IMR-90 (cell line): ENCODE measurements at regions of chr22 and their contacts with region 1.

Region 1: DNA sequence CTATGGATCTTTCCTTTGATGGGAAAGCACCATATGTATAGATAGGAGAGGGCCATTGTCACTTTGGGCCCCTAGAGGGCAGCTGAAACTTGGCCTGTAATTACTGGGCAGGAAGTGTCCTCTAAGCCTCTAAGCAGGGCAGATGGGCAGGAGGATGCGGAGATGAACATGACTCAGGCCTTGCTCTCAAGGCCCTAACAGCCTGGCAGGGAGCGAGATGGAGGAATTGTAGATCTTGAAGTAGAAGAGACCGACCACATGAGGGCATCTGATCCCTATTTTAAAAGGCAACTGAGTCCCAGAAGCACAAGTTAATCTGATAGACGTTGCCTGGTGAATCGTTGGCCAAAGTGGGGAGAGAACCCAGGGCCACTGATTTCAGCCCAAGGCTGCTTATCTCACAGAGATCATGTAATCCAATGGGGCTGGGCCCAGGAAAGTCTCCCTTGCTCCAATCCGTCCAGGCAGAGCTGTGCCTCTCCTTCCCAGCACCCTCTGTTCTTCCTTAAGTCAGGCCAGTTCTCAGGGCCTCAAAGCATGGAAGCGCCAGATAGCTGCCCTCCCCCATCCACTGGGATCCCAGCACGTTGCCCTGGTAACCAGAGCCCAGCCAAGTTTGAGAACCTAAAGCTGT is 2.5 kb upstream of the SEPTIN3 start:
- DNase-seq: peak; percentile 88
- ATAC-seq: peak; percentile 89
- H3K4me3 ChIP-seq: no peak overlapping the region
- H3K27ac ChIP-seq: no peak overlapping the region
- H3K4me1 ChIP-seq: no peaks in the 10 kb centered on the region; the same call in 1 of the 2 replicates
- H3K27me3 ChIP-seq: peaks cover 18% of the 10 kb centered on the region; the same call in 1 of the 2 replicates
- CTCF ChIP-seq: peak; percentile 65
- POLR2A ChIP-seq: no peak
- RAD21 ChIP-seq: peak; percentile 66

Region 2: DNA sequence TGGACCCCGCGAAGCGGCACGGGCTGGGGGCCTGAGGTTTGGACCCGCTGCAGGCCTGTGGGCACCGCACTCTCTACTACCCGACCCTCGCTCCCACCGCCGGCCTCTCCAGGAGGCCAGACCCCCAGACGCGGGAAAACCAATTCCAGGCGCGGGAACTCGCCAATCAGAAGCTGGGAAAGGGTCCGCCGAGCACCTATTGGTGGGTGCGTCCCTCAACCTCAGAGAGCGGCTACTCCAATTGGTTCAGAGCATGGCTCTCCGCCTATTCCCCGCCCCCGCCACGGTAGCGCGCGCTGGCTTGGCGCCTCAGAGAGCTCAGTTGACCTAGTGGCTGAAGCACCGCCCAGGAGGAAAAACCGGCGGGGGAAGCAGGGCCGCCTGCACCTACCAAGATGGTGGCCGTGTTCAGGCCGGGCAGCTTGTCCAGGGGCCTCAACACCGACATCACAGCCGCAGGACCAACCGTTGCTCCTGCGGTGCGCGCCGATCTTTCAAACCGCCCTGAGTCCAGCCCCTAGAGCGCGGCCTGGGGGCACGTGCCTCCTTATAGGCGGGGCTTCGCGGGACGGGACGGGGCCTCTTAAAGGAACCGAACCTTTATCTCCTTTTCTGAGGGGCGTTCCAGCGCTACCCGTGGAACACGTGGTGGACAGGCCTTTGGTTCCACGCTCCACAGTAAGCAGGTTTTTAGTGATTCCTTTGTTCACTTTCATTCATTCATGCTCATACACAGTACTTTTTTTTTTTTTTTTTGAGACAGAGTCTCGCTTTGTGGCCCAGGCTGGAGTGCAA is 19.9 kb before region 1 on chr22 and contains the start of gene CENPM:
- CTCF ChIA-PET with region 1: no interaction called
- POLR2A ChIA-PET with region 1: no interaction called
- dilution Hi-C with region 1: no loop called
- in situ Hi-C with region 1: no loop called
- intact Hi-C with region 1: no loop called
- DNase-seq: peak; percentile 91
- ATAC-seq: peak; percentile 98
- H3K4me3 ChIP-seq: peak within 1 kb of the TSS; percentile 82
- H3K27ac ChIP-seq: peak within 1 kb of the TSS; percentile 42; the same call in 1 of the 2 replicates
- H3K4me1 ChIP-seq: peaks cover 8% of the 10 kb centered on the region
- H3K27me3 ChIP-seq: no peaks in the 10 kb centered on the region
- CTCF ChIP-seq: no peak
- POLR2A ChIP-seq: no peak
- RAD21 ChIP-seq: no peak
- total RNA-seq, gene CENPM: 14.7 and 18.1 TPM in 2 replicates

Region 3: DNA sequence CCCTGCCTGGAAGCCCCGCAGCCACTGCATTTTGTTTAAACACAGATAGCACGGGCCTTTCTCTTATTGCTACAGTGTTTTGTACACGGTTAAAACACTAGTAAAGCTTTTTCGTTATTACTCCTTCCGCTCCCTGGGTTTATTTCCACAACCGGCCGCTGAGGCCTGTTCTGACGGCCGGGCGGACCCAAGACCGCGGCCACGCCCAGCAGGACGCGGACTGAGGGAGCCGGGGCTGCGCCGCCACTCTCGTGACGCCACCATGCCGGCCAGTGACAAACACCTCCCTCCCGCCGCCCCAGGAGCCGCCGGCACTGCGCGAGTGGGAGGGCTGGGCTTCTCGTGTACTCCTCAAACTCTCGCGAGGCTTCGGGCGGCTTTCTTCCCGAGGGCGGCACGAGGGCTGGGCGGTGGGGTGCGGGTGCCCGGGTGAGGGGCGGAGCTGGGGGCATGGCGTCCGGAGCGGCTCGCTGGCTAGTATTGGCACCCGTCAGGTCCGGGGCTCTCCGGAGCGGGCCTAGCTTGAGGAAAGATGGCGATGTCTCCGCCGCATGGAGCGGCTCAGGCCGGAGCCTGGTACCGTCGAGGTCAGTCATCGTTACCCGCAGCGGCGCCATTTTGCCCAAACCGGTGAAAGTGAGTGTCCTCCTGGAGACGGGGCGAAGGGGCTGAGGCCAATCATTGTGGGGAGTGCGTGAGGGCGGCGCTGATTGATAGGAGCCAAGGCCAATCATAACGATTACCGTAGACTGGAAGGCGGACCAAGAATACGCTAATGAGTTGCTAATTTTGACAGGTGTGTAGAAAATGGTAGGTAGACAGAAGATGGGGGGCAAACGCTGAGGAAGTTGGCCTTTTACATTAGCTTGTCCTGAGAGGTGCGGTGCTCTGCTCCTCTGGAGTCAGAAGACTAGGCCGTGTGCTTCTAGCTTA is 112.9 kb after region 1 on chr22 and contains the start of gene SMDT1:
- CTCF ChIA-PET with region 1: no interaction called
- POLR2A ChIA-PET with region 1: no interaction called
- dilution Hi-C with region 1: no loop called
- in situ Hi-C with region 1: no loop called
- intact Hi-C with region 1: loop called (anchors 2 kb)
- DNase-seq: peak; percentile 97
- ATAC-seq: peak; percentile 92
- H3K4me3 ChIP-seq: peak within 1 kb of the TSS; percentile 59
- H3K27ac ChIP-seq: peak within 1 kb of the TSS; percentile 74
- H3K4me1 ChIP-seq: peaks cover 10% of the 10 kb centered on the region
- H3K27me3 ChIP-seq: no peaks in the 10 kb centered on the region
- CTCF ChIP-seq: no peak
- POLR2A ChIP-seq: peak; percentile 90
- RAD21 ChIP-seq: no peak
- total RNA-seq, gene SMDT1: 2.3 and 2.5 TPM in 2 replicates

Region 4: DNA sequence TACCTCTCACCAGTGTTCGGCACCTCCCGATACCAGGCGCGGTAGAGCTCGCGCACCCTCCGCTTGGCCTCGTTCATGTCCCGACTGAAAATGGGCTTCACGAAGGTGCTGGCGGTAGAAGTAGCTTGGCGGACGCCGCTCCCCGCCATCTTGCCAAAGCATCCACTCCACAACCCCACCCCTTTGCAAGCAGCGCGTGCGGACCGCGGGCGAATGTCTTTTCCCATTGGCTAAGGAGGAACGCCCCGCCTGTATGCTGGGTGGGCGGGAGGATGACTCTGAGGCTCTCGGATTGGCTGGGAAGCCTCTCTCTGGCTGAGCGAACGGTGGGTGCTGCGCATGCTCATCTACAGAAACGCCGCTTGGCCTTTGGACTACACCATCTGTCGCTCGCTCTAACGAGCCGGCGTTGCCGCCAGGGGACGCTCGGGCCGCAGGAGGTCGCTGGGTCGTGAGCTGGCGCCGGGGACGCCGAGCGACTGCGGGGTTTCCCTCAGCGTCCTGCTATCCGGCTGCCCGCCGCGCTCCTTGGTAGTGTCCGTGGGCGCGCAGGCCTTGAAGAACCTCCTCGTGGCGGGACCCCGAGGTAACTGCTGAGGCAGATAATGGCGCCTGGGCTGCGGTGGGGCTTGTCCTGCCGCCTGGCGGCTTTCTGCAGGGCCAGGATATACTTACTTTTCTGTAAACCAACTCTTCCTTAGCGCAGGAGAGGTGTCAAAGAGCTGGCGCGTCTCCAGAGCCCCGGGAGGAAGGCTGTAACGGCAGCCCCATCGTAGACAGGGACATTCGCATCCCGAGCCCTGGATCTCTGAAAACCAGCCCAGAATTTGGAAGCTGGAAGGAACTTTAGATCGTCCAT is 124.1 kb after region 1 on chr22 and contains the start of gene NDUFA6:
- CTCF ChIA-PET with region 1: interaction called, 3 read pairs
- POLR2A ChIA-PET with region 1: no interaction called
- dilution Hi-C with region 1: no loop called
- in situ Hi-C with region 1: no loop called
- intact Hi-C with region 1: loop called (anchors 1 kb)
- DNase-seq: peak; percentile 99
- ATAC-seq: peak; percentile 98
- H3K4me3 ChIP-seq: peak within 1 kb of the TSS; percentile 64
- H3K27ac ChIP-seq: peak within 1 kb of the TSS; percentile 82
- H3K4me1 ChIP-seq: peaks cover 2% of the 10 kb centered on the region; the same call in 1 of the 2 replicates
- H3K27me3 ChIP-seq: no peaks in the 10 kb centered on the region
- CTCF ChIP-seq: peak; percentile 94
- POLR2A ChIP-seq: peak; percentile 96
- RAD21 ChIP-seq: peak; percentile 82
- total RNA-seq, gene NDUFA6: 48.8 and 92.2 TPM in 2 replicates

Region 5: GRCh38 chr22:42114721-42115120 is 148.0 kb after region 1 on chr22:
- CTCF ChIA-PET with region 1: interaction called, 4 read pairs
- POLR2A ChIA-PET with region 1: no interaction called
- dilution Hi-C with region 1: no loop called
- in situ Hi-C with region 1: no loop called
- intact Hi-C with region 1: loop called (anchors 1 kb)
- DNase-seq: peak; percentile 6
- ATAC-seq: no peak
- H3K4me3 ChIP-seq: no peak overlapping the region
- H3K27ac ChIP-seq: no peak overlapping the region
- H3K4me1 ChIP-seq: peaks cover 2% of the 10 kb centered on the region; the same call in 1 of the 2 replicates
- H3K27me3 ChIP-seq: no peaks in the 10 kb centered on the region; the same call in 1 of the 2 replicates
- CTCF ChIP-seq: peak; percentile 31
- POLR2A ChIP-seq: no peak
- RAD21 ChIP-seq: peak; percentile 51

Region 6: GRCh38 chr22:42437488-42438292 is 471.0 kb after region 1 on chr22:
- CTCF ChIA-PET with region 1: interaction called, 3 read pairs
- POLR2A ChIA-PET with region 1: no interaction called
- dilution Hi-C with region 1: no loop called
- in situ Hi-C with region 1: loop called (anchors 5 kb)
- intact Hi-C with region 1: loop called (anchors 2 kb)
- DNase-seq: peak; percentile 18
- ATAC-seq: peak; percentile 91
- H3K4me3 ChIP-seq: peak overlapping the region; percentile 42
- H3K27ac ChIP-seq: no peak overlapping the region
- H3K4me1 ChIP-seq: peaks cover 3% of the 10 kb centered on the region; the same call in 1 of the 2 replicates
- H3K27me3 ChIP-seq: peaks cover 26% of the 10 kb centered on the region
- CTCF ChIP-seq: peak; percentile 93
- POLR2A ChIP-seq: no peak
- RAD21 ChIP-seq: peak; percentile 96

Region 7: DNA sequence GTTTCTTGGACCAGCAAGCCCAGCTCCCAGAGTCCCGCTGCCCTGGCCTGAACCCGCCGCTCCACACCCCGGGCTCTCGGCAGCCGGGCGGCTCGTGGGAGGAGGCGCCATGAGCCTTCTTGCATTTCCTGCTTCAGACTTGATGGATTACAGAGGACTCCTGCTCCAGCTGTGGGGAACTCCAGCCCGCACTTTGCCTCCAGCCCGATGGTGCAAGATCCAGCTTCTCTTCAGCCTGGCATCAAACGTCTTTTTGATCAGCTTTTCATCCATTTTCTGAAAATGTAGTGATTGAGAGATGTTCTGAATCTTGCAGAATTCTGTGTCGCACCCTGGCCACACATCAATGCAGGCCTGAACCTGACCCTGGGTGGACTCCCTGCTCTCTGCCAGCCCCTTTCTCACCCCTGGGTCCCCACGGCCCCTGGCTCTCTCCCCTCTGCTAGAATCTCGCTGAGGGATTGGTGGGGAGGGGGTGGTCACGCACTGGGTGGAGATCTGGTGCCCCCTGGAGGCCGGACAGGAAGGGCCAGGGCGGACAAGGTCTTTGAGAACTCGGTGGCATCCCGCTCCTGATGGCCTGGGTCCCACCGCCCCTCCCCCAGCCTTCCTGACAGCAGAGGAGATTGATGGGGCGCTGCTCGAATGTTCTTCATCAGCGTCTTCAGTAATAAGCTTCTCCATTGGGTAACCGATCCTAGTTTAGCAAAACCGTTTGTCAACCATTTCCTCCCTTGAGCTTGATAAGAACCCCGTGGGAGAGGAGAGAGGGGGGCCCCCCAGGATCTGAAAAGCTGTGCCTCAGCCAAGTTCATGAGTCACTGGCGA is 477.6 kb after region 1 on chr22:
- CTCF ChIA-PET with region 1: interaction called, 7 read pairs
- POLR2A ChIA-PET with region 1: no interaction called
- dilution Hi-C with region 1: no loop called
- in situ Hi-C with region 1: loop called (anchors 5 kb)
- intact Hi-C with region 1: no loop called
- DNase-seq: peak; percentile 87
- ATAC-seq: peak; percentile 90
- H3K4me3 ChIP-seq: peak overlapping the region; percentile 27
- H3K27ac ChIP-seq: peak overlapping the region; percentile 24
- H3K4me1 ChIP-seq: peaks cover 12% of the 10 kb centered on the region; the same call in 1 of the 2 replicates
- H3K27me3 ChIP-seq: peaks cover 3% of the 10 kb centered on the region; the same call in 1 of the 2 replicates
- CTCF ChIP-seq: peak; percentile 71
- POLR2A ChIP-seq: no peak
- RAD21 ChIP-seq: peak; percentile 62

Region 8: GRCh38 chr22:42473484-42474193 is 506.9 kb after region 1 on chr22:
- CTCF ChIA-PET with region 1: no interaction called
- POLR2A ChIA-PET with region 1: no interaction called
- dilution Hi-C with region 1: no loop called
- in situ Hi-C with region 1: no loop called
- intact Hi-C with region 1: loop called (anchors 2 kb)
- DNase-seq: peak; percentile 63
- ATAC-seq: peak; percentile 82
- H3K4me3 ChIP-seq: no peak overlapping the region
- H3K27ac ChIP-seq: no peak overlapping the region
- H3K4me1 ChIP-seq: no peaks in the 10 kb centered on the region
- H3K27me3 ChIP-seq: peaks cover 22% of the 10 kb centered on the region
- CTCF ChIP-seq: peak; percentile 66
- POLR2A ChIP-seq: no peak
- RAD21 ChIP-seq: peak; percentile 59